Activated CD4-positive, alpha-beta T cell treated with anti-CD3 and anti-CD28 coated beads for 36 hours (primary cell): ENCODE measurements at regions of chr7 and their contacts with region 1.

Region 1: GRCh38 chr7:80060218-80060806 is 74.3 kb upstream of the GNAI1 start:
- DNase-seq: no peak
- ATAC-seq: no peak
- H3K4me3 Mint-ChIP-seq: no peak overlapping the region
- H3K27ac Mint-ChIP-seq: no peak overlapping the region
- H3K4me1 Mint-ChIP-seq: no peaks in the 10 kb centered on the region
- H3K27me3 Mint-ChIP-seq: no peaks in the 10 kb centered on the region

Region 2: DNA sequence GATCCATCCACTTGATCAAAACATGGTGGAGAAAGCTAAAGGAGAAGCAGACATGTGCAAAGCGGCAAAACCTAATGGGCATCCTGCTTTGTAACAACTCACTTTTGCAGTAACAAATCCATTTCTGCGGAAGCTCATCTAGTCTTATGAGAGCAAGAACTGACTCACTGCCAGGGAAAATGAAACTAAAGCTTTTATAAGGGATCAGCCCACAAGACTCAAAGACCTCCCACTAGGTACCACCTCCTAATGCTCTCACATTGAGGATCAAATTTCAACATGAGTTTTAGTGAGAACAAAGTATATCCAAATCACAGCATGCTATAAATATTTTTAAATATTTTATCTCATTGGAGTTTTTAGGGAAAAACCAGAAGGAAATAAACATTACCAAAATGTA is 45.8 kb before region 1 on chr7:
- CTCF ChIA-PET with region 1: no interaction called
- POLR2A ChIA-PET with region 1: no interaction called
- intact Hi-C with region 1: no loop called
- DNase-seq: no peak
- ATAC-seq: no peak
- H3K4me3 Mint-ChIP-seq: no peak overlapping the region
- H3K27ac Mint-ChIP-seq: no peak overlapping the region
- H3K4me1 Mint-ChIP-seq: no peaks in the 10 kb centered on the region
- H3K27me3 Mint-ChIP-seq: no peaks in the 10 kb centered on the region

Region 3: DNA sequence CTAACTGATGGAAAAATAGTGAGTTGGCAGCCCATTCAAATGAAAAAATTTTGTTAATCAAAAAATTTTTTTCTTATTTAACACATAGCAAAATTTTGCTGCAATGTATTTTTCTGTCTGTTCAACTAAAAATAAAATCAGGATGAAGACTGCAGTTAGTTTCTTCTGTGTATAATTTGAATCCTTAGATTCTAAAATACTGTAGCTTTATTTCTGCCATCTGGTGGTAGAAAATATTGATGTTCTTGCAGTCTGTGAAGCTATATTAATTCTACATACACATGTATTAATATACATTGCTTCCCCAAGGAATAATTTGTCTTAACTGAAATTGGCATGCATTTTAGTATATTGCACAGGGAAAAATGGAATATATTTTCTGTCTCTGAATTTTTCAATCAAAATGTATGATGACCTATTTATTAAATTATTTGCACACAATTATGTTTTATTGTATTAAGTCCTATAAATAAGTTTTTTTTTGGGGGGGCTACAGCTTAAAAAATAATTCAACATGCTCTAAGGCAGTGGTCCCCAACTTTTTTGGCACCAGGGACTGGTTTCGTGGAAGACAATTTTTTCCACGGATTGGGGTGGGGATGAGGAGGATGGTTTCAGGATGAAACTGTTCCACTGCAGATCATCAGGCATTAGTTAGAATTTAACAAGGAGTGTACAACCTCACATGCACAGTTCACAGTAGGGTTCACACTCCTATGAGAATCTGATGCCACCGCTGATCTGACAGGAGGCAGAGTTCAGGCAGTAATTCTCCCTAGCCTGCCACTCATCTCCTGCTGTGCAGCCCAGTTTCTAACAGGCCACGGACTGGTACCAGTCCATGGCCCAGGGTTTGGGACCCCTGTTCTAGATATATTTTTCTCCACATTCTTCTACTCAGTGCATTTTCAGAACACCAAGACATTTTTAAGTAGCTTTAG is 332.2 kb after region 1 on chr7:
- CTCF ChIA-PET with region 1: interaction called, 8 read pairs
- POLR2A ChIA-PET with region 1: no interaction called
- intact Hi-C with region 1: loop called (anchors 1 to 2 kb)
- DNase-seq: no peak
- ATAC-seq: no peak
- H3K4me3 Mint-ChIP-seq: no peak overlapping the region
- H3K27ac Mint-ChIP-seq: no peak overlapping the region
- H3K4me1 Mint-ChIP-seq: no peaks in the 10 kb centered on the region
- H3K27me3 Mint-ChIP-seq: no peaks in the 10 kb centered on the region

Region 4: DNA sequence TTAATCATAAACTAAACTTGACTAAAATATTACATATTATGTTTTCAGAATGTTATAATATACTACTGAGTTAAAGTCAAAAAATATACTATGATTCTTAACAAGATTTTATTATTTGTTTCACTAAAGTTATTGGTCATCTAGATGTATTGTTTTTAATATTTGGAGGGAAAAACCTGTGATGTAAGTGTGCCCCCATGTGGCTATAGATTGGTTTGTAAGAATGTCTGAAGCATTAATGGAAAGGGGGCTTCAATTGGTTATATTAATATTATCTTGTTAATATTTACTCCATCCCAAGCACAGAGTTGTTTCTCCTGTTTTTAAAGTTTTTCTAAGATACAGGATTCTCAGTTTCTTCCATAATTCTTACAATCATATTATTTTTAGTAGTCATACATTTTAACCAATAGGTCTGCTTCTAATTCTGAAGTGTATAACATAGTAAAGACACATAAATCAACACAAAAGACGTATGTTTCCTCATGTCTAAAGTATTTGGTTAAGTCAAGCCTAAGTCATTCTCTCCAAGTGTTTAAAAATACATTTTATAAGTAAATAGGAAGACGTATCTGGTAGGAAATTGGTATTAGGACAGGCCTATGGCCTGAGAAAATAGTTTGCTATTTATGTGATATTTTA is 393.5 kb after region 1 on chr7:
- CTCF ChIA-PET with region 1: interaction called, 12 read pairs
- POLR2A ChIA-PET with region 1: no interaction called
- intact Hi-C with region 1: loop called (anchors 1 to 2 kb)
- DNase-seq: no peak
- ATAC-seq: no peak
- H3K4me3 Mint-ChIP-seq: no peak overlapping the region
- H3K27ac Mint-ChIP-seq: no peak overlapping the region
- H3K4me1 Mint-ChIP-seq: no peaks in the 10 kb centered on the region
- H3K27me3 Mint-ChIP-seq: no peaks in the 10 kb centered on the region

Region 5: GRCh38 chr7:80659120-80660055 is 599.1 kb after region 1 on chr7:
- CTCF ChIA-PET with region 1: interaction called, 5 read pairs
- POLR2A ChIA-PET with region 1: no interaction called
- intact Hi-C with region 1: loop called (anchors 1 to 10 kb)
- DNase-seq: no peak
- ATAC-seq: no peak
- H3K4me3 Mint-ChIP-seq: no peak overlapping the region
- H3K27ac Mint-ChIP-seq: no peak overlapping the region
- H3K4me1 Mint-ChIP-seq: no peaks in the 10 kb centered on the region
- H3K27me3 Mint-ChIP-seq: no peaks in the 10 kb centered on the region